Astrocyte of the cerebellum (primary cell): ENCODE measurements at regions of chr10 and their contacts with region 1.

Region 1: DNA sequence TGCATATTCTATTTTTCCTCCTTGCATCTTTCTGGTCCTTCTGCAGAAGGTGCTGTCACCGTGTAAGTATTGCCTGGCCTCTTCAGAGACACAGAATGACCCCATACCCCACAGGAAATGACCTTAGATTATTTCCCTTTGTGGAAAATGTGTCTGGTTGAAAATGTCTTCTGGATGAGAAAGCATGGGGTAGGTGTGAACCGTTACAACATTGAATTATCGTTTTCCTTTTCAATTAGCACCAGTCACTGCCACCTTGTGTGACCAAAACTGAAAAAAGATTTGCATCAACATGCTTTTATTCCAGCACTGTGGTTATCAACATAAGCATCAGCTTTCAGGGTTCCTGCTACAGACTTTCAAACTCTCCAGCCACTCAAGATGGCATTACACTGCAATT is 58.0 kb upstream of the CELF2 start:
- DNase-seq: no peak
- H3K4me3 ChIP-seq: no peak overlapping the region
- CTCF ChIP-seq: no peak

Region 2: DNA sequence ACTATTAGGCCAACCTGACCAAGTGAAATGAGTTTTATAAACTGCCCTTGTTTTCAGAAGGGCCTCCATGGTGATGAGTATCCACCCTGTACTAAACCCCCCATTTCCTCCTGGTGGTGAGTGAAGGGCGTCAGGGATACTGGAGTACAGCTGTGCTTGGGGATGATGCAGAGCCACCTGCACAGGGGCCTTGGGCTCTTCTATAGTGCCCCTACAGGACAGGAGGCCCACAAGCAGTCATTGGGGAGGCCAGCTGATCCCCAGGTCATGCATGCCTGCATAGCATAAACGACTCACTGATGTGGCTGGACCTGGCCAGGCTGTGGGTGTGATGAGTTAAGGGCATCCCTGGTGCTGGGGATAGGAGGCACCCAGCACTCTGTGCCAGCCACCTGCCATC is 56.0 kb before region 1 on chr10:
- in situ Hi-C with region 1: no loop called
- DNase-seq: no peak
- H3K4me3 ChIP-seq: no peak overlapping the region
- CTCF ChIP-seq: no peak

Region 3: GRCh38 chr10:11050301-11051287 is 90.9 kb after region 1 on chr10:
- in situ Hi-C with region 1: loop called (anchors 5 kb)
- DNase-seq: no peak
- H3K4me3 ChIP-seq: no peak overlapping the region
- CTCF ChIP-seq: no peak